ENCODE measurements at regions of chr6 and their contacts with region 1.

Region 1: GRCh38 chr6:149082286-149082707 is 235.2 kb upstream of the TAB2 start:
- DNase-seq: peak; percentile 88
- H3K4me3 ChIP-seq: no peak overlapping the region
- H3K27ac ChIP-seq: no peak overlapping the region
- H3K4me1 ChIP-seq: peaks cover 0 to 44% (median 31%) of the 10 kb centered on the region in 4 donors
- H3K27me3 ChIP-seq: no peaks in the 10 kb centered on the region
- CTCF ChIP-seq: peak; percentile 60 to 79 (median 76)
- EP300 ChIP-seq: no peak
- POLR2A ChIP-seq: no peak

Region 2: GRCh38 chr6:149028767-149029405 is 53.4 kb before region 1 on chr6:
- intact Hi-C with region 1: loop called (anchors 2 kb)
- DNase-seq: peak; percentile 85
- H3K4me3 ChIP-seq: no peak overlapping the region
- H3K27ac ChIP-seq: peak overlapping the region in 1 of 4 donors; percentile 20
- H3K4me1 ChIP-seq: peaks cover 0 to 23% (median 20%) of the 10 kb centered on the region in 4 donors
- H3K27me3 ChIP-seq: no peaks in the 10 kb centered on the region
- CTCF ChIP-seq: peak; percentile 49 to 73 (median 66)
- EP300 ChIP-seq: no peak
- POLR2A ChIP-seq: no peak

Region 3: GRCh38 chr6:149211046-149211571 is 128.8 kb after region 1 on chr6:
- intact Hi-C with region 1: loop called (anchors 5 kb)
- DNase-seq: no peak
- H3K4me3 ChIP-seq: no peak overlapping the region
- H3K27ac ChIP-seq: peak overlapping the region in 3 of 4 donors; percentile 32 to 80 (median 62)
- H3K4me1 ChIP-seq: peaks cover 0 to 54% (median 41%) of the 10 kb centered on the region in 4 donors
- H3K27me3 ChIP-seq: no peaks in the 10 kb centered on the region
- CTCF ChIP-seq: no peak
- EP300 ChIP-seq: no peak
- POLR2A ChIP-seq: no peak

Measured in sigmoid colon (tissue), 7 donors.